ENCODE measurements at regions of chr18 and their contacts with region 1.

Region 1: DNA sequence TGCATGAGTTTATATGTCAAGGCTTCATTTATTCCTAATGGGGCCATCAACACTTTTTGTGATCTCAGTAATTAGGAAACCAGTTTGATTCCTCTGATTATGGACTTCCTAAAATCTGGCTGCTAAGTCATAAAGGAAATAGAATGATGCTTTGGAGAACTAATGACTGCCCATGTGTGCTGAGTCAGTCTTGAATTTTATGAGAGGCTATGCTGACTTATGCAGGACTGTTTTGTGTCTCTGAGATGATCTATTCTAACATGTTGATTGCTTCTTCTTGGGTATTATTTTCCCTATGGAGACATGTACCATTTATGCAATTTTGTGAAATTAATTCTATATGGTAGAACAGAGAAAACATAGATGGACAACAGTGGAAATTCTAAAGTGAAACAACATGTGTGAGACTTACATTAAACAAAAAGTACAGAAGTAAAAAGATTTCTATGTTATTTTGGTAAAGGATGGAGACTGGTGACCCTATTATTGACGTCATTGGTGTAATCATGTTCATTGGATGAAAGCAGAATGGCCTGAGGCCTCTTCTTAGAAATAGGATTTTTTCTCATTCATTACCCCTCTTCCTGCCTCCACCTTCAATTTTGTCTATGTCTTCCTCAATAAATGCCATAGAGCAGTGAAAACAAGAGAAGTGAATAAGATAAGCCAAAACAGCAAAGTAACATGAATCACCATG is 1658.2 kb upstream of the PIK3C3 start:
- DNase-seq: no peak
- H3K4me3 ChIP-seq: no peak overlapping the region
- H3K27ac ChIP-seq: no peak overlapping the region
- H3K4me1 ChIP-seq: no peaks in the 10 kb centered on the region
- H3K27me3 ChIP-seq: no peaks in the 10 kb centered on the region
- CTCF ChIP-seq: no peak
- EP300 ChIP-seq: no peak
- POLR2A ChIP-seq: no peak

Region 2: DNA sequence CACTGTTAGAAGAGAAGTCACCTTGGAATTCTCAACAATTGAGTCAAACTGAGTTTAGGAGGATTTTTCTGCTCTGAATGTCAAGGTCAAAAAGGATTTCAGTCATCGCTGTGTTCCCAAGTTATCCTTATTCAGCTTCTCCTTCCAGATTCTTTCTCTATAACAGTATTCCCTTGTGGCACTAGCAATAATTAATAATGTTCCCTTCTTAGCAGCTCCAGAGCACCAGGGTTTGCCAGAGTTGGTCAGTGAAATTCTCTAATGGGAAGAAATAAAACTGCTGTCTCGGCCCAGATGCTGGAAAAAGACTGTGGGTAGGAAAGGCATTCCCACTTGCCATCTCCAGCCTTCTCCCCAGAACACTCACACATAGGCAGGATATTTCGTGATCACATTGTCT is 822.2 kb after region 1 on chr18:
- in situ Hi-C with region 1: no loop called
- intact Hi-C with region 1: loop called (anchors 5 kb)
- DNase-seq: no peak
- H3K4me3 ChIP-seq: no peak overlapping the region
- H3K27ac ChIP-seq: no peak overlapping the region
- H3K4me1 ChIP-seq: no peaks in the 10 kb centered on the region
- H3K27me3 ChIP-seq: no peaks in the 10 kb centered on the region
- CTCF ChIP-seq: no peak
- EP300 ChIP-seq: no peak
- POLR2A ChIP-seq: no peak